ENCODE measurements at regions of chr9 and their contacts with region 1.

Region 1: DNA sequence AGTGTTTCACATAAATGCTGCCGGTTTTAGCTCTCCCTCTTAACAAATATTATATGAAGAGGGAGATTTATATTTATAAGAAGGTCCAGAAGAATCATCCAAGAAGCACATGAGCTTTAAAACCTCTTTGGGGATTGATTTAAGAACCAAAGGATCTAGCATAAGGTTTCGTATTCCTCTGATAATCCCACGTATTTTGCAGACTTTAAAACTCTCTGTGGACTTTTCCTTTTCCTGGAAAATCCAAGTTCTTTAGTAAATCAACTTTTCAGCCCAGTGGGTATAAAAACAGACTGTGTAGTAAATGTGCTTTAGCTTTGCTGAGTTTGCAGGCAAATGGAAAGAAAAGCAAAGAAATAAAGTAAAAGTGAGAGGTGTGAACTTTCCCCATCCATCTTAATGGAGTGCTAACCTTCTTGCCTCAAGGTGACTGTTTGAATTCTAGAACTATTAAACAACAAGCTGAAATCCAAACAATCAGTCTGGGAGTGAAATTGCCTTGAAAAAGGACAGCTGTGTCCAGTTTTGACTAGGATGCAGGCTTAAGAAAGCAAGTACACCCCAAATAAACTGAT is 363.4 kb upstream of the SLC24A2 start:
- DNase-seq: no peak
- H3K4me3 ChIP-seq: no peak overlapping the region
- H3K27ac ChIP-seq: no peak overlapping the region
- H3K4me1 ChIP-seq: peaks cover 0 to 28% (median 14%) of the 10 kb centered on the region in 4 donors
- H3K27me3 ChIP-seq: no peaks in the 10 kb centered on the region
- CTCF ChIP-seq: no peak
- EP300 ChIP-seq: no peak
- POLR2A ChIP-seq: no peak

Region 2: GRCh38 chr9:20084125-20084524 is 68.1 kb before region 1 on chr9:
- intact Hi-C with region 1: no loop called
- DNase-seq: no peak
- H3K4me3 ChIP-seq: no peak overlapping the region
- H3K27ac ChIP-seq: no peak overlapping the region
- H3K4me1 ChIP-seq: no peaks in the 10 kb centered on the region
- H3K27me3 ChIP-seq: no peaks in the 10 kb centered on the region
- CTCF ChIP-seq: no peak
- EP300 ChIP-seq: no peak
- POLR2A ChIP-seq: no peak

Region 3: GRCh38 chr9:20319641-20320337 is 167.6 kb after region 1 on chr9:
- intact Hi-C with region 1: loop called (anchors 10 kb)
- DNase-seq: peak; percentile 86
- H3K4me3 ChIP-seq: no peak overlapping the region
- H3K27ac ChIP-seq: peak overlapping the region; percentile 15 to 65 (median 48)
- H3K4me1 ChIP-seq: peaks cover 9 to 45% (median 32%) of the 10 kb centered on the region in 4 donors
- H3K27me3 ChIP-seq: no peaks in the 10 kb centered on the region
- CTCF ChIP-seq: no peak
- EP300 ChIP-seq: no peak
- POLR2A ChIP-seq: no peak